MCF 10A (cell line): ENCODE measurements at regions of chr15 and their contacts with region 1.

Region 1: GRCh38 chr15:39580117-39580484 is 778 bp upstream of the THBS1 start:
- DNase-seq: peak; percentile 95
- H3K4me3 Mint-ChIP-seq: peak overlapping the region; percentile 78
- H3K27ac Mint-ChIP-seq: peak overlapping the region; percentile 24
- H3K4me1 Mint-ChIP-seq: peaks cover 38% of the 10 kb centered on the region
- H3K27me3 Mint-ChIP-seq: no peaks in the 10 kb centered on the region
- CTCF ChIP-seq: peak; percentile 96

Region 2: DNA sequence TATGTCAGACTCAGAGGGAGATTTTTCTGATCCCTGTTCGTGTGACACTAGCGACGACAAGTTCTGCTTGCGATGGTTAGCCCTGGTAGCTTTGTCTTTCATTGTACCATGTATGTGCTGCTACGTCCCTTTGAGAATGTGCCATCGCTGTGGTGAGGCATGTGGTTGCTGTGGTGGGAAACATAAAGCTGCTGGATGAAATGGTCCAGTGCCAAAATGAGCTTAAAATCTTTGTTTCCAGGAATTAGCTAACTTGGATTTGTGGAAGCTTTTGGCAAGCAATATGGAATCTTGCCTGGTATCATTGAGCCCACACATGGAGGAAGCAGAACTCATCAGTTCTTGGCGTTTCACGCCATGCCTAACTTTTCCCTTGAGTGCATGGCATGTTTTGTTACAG is 1228.6 kb before region 1 on chr15:
- CTCF ChIA-PET with region 1: no interaction called
- POLR2A ChIA-PET with region 1: no interaction called
- intact Hi-C with region 1: no loop called
- DNase-seq: no peak
- H3K4me3 Mint-ChIP-seq: no peak overlapping the region
- H3K27ac Mint-ChIP-seq: no peak overlapping the region
- H3K4me1 Mint-ChIP-seq: no peaks in the 10 kb centered on the region
- H3K27me3 Mint-ChIP-seq: no peaks in the 10 kb centered on the region
- CTCF ChIP-seq: no peak

Region 3: GRCh38 chr15:38817427-38818156 is 762.5 kb before region 1 on chr15:
- CTCF ChIA-PET with region 1: interaction called, 8 read pairs
- POLR2A ChIA-PET with region 1: interaction called, 3 read pairs
- intact Hi-C with region 1: loop called (anchors 1 kb)
- DNase-seq: peak; percentile 85
- H3K4me3 Mint-ChIP-seq: no peak overlapping the region
- H3K27ac Mint-ChIP-seq: no peak overlapping the region
- H3K4me1 Mint-ChIP-seq: no peaks in the 10 kb centered on the region
- H3K27me3 Mint-ChIP-seq: no peaks in the 10 kb centered on the region
- CTCF ChIP-seq: peak; percentile 100

Region 4: GRCh38 chr15:39180483-39180933 is 399.6 kb before region 1 on chr15:
- CTCF ChIA-PET with region 1: interaction called, 35 read pairs
- POLR2A ChIA-PET with region 1: interaction called, 32 read pairs
- intact Hi-C with region 1: no loop called
- DNase-seq: no peak
- H3K4me3 Mint-ChIP-seq: no peak overlapping the region
- H3K27ac Mint-ChIP-seq: peak overlapping the region; percentile 36
- H3K4me1 Mint-ChIP-seq: peaks cover 49% of the 10 kb centered on the region
- H3K27me3 Mint-ChIP-seq: no peaks in the 10 kb centered on the region
- CTCF ChIP-seq: no peak

Region 5: DNA sequence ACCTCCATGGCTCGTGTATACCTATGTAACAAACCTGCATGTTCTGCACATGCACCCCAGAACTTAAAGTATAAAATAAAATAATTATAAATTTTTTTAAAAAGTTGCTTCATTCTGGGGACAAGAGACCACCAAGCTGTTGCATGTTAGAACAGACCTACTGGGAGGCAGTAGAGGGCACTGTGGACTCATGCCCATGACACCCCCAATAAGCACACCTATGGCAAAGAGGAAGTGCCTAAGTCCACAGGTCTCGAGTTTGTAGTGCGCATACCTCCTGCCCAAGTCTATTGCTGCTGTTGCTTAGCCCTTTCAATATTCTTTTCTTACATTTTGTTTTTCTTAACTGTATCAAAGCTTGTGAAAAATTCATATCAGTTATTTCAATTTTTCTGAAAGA is 267.1 kb before region 1 on chr15:
- CTCF ChIA-PET with region 1: interaction called, 5 read pairs
- POLR2A ChIA-PET with region 1: interaction called, 3 read pairs
- intact Hi-C with region 1: loop called (anchors 5 kb)
- DNase-seq: peak; percentile 23
- H3K4me3 Mint-ChIP-seq: no peak overlapping the region
- H3K27ac Mint-ChIP-seq: no peak overlapping the region
- H3K4me1 Mint-ChIP-seq: no peaks in the 10 kb centered on the region
- H3K27me3 Mint-ChIP-seq: no peaks in the 10 kb centered on the region
- CTCF ChIP-seq: no peak

Region 6: DNA sequence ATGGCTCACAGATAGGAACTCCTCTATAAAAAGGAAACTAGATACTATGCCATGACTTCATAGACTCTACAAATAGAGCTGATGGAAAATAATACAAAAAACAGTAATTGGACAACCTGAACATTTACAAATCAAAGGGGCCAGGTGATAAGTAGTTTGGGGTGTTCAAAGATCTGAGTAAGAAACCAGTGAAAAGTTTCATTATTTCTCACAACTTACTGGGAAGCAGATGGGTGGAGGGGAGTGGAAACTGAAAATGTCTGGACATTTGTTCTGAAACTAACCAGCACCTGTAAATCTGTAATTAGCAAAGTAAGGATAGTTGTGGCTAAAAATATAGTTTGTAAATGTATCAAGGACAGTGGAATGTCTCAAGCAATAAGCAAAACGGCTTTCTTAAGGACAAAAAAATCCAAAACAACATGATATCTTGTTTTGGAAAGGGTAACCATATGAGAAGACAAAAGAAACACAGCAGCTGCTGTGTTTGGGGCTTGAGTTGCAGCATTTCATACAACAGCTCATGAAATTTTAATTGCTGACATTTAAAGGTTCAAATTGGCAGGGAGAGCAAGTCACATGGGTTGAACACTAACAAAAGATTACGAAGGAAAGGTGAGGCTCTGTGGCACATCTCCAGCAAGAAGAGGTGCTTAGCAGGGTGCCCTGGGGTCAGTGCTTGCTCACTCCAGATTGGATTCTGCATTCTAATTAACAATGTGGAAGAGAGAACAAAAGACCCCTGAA is 26.0 kb before region 1 on chr15:
- CTCF ChIA-PET with region 1: interaction called, 32 read pairs
- POLR2A ChIA-PET with region 1: interaction called, 35 read pairs
- intact Hi-C with region 1: no loop called
- DNase-seq: peak; percentile 78
- H3K4me3 Mint-ChIP-seq: peak overlapping the region; percentile 22
- H3K27ac Mint-ChIP-seq: peak overlapping the region; percentile 50
- H3K4me1 Mint-ChIP-seq: peaks cover 39% of the 10 kb centered on the region
- H3K27me3 Mint-ChIP-seq: no peaks in the 10 kb centered on the region
- CTCF ChIP-seq: no peak

Region 7: DNA sequence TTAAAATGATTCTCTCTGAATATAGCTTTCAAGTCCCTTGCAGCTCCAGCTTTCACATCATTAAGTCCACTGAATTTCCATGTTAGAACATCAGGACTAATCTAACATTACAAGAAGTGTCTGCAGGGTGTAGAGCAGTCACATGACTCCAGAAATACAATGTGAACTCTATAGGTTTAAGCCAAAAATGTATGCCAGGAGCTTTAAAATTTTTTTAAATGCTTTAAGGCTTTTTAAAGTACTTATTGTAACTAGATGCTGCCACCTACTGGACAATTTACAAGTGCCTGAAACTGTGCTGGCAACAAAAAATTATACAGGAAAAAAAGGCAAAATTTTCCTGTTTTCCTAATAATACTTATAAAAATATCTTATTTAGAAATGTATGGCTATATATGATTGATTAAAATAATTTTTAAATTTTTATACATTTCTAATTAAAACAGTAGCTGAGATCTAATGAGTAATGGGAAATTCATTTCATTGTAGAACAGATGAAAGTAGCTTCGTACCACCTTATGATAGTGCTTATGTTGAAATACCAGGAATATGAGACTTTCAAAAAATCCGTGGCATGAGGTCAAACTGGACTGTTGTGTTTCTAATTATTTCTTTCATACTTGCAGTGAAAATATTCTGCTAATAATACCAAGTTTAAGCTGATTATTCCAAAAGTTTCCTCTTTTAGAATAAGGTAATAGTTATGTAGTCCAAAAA is 176.9 kb after region 1 on chr15:
- CTCF ChIA-PET with region 1: interaction called, 141 read pairs
- POLR2A ChIA-PET with region 1: interaction called, 11 read pairs
- intact Hi-C with region 1: loop called (anchors 1 kb)
- DNase-seq: peak; percentile 61
- H3K4me3 Mint-ChIP-seq: no peak overlapping the region
- H3K27ac Mint-ChIP-seq: no peak overlapping the region
- H3K4me1 Mint-ChIP-seq: no peaks in the 10 kb centered on the region
- H3K27me3 Mint-ChIP-seq: no peaks in the 10 kb centered on the region
- CTCF ChIP-seq: peak; percentile 77